Calu3 (cell line): ENCODE measurements at regions of chr7 and their contacts with region 1.

Region 1: DNA sequence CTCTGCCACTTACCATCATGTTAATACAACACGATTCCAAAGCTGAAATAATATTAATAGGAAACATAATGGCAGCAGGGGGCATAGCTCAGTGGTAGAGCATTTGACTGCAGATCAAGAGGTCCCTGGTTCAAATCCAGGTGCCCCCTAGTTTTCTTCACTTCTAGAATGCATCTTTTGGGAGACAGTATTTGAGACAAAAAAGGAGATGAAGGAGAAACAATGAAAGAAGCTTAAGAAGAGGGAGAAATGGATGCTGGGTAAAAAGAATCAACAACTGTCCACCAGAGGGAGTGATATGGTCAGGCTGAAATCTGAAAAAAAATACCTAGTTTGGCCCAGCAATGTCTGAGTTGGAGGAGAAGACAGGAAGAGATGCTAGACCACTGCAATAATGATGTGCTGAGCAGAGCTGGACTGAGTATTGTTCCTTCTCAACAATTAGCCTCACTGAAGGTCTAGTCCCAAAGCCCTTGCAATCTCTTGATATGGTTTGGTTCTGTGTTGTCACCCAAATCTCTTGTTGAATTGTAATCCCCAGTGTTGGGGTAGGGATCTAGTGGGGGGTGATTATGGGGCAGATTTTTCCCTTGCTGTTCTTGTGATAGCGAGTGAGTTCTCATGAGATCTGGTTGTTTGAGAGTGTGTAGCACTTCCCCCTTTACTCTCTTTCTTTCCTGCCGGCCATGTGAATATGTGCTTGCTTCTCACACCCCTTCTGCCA is 48.3 kb downstream of the ZNF783 start:
- DNase-seq: peak; percentile 46
- H3K4me3 Mint-ChIP-seq: no peak overlapping the region
- H3K27ac Mint-ChIP-seq: no peak overlapping the region
- H3K4me1 Mint-ChIP-seq: no peaks in the 10 kb centered on the region
- H3K27me3 Mint-ChIP-seq: peaks cover 15% of the 10 kb centered on the region
- CTCF ChIP-seq: peak; percentile 67

Region 2: GRCh38 chr7:149409895-149410294 is 99.6 kb after region 1 on chr7:
- CTCF ChIA-PET with region 1: interaction called, 4 read pairs
- intact Hi-C with region 1: loop called (anchors 5 kb)
- DNase-seq: no peak
- H3K4me3 Mint-ChIP-seq: no peak overlapping the region
- H3K27ac Mint-ChIP-seq: no peak overlapping the region
- H3K4me1 Mint-ChIP-seq: no peaks in the 10 kb centered on the region
- H3K27me3 Mint-ChIP-seq: peaks cover 29% of the 10 kb centered on the region
- CTCF ChIP-seq: no peak

Region 3: GRCh38 chr7:149422129-149422913 is 112.0 kb after region 1 on chr7:
- CTCF ChIA-PET with region 1: interaction called, 8 read pairs
- intact Hi-C with region 1: loop called (anchors 1 kb)
- DNase-seq: peak; percentile 86
- H3K4me3 Mint-ChIP-seq: peak overlapping the region; percentile 82
- H3K27ac Mint-ChIP-seq: no peak overlapping the region
- H3K4me1 Mint-ChIP-seq: no peaks in the 10 kb centered on the region
- H3K27me3 Mint-ChIP-seq: no peaks in the 10 kb centered on the region
- CTCF ChIP-seq: peak; percentile 53

Region 4: GRCh38 chr7:149497456-149498261 is 187.4 kb after region 1 on chr7 and contains the start of gene ZNF746:
- CTCF ChIA-PET with region 1: no interaction called
- intact Hi-C with region 1: loop called (anchors 5 kb)
- DNase-seq: peak; percentile 89
- H3K4me3 Mint-ChIP-seq: peak within 1 kb of the TSS; percentile 96
- H3K27ac Mint-ChIP-seq: peak within 1 kb of the TSS; percentile 81
- H3K4me1 Mint-ChIP-seq: peaks cover 9% of the 10 kb centered on the region
- H3K27me3 Mint-ChIP-seq: peaks cover 25% of the 10 kb centered on the region
- CTCF ChIP-seq: peak; percentile 52
- total RNA-seq, gene ZNF746: 17.5 and 18.5 TPM in 2 replicates

Region 5: GRCh38 chr7:149624419-149625339 is 314.4 kb after region 1 on chr7:
- CTCF ChIA-PET with region 1: interaction called, 14 read pairs
- intact Hi-C with region 1: no loop called
- DNase-seq: peak; percentile 92
- H3K4me3 Mint-ChIP-seq: peak overlapping the region; percentile 96
- H3K27ac Mint-ChIP-seq: no peak overlapping the region
- H3K4me1 Mint-ChIP-seq: no peaks in the 10 kb centered on the region
- H3K27me3 Mint-ChIP-seq: peaks cover 27% of the 10 kb centered on the region
- CTCF ChIP-seq: peak; percentile 92